Astrocyte of the cerebellum (primary cell): ENCODE measurements at regions of chr6 and their contacts with region 1.

Region 1: DNA sequence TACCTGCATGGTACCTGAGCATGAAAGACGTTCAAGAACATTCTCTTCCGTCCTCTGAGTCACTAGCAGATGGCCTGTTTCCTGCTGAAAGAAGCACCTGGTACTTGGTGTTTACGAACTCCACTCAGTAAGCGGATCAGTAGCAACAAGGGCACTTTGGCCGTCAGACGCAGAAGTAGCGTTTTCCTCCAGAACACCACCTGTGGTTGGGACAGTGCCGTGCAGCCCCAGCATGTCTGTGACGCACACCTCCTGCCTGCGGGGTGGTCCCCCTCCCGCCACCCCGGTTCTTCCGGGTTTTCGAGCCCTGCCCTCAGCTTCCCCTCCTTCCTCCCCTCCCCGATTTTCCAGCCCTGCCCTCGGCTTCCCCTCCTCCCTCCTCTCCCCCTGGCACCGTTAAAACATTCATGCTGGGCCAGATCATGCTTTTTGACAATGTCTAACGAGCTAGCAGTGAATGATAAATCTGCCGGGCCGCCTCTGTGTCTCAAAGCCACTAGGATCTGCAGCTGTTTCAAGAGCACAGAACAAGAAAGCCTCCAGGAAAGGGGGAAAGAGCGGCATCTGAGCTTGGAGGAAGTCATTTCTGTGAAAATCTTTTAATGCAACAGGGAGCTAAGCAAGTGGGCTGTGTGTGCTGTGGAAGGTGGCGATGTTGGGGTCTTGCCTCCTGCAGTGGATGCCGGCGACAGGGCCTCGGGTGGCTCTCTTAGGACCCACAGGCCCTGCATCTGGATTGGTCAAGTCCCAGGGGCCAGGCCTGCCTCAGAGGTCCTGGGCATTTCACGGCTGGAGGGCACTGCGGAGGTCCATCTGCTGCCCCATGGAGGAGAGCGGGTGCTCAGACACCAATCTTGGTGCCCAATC is 207.9 kb downstream of the ERMARD start:
- DNase-seq: no peak
- H3K4me3 ChIP-seq: no peak overlapping the region
- CTCF ChIP-seq: no peak

Region 2: GRCh38 chr6:170102582-170103481 is 143.5 kb after region 1 on chr6:
- in situ Hi-C with region 1: loop called (anchors 10 kb)
- DNase-seq: no peak
- H3K4me3 ChIP-seq: no peak overlapping the region
- CTCF ChIP-seq: no peak

Region 3: GRCh38 chr6:170480050-170480692 is 520.8 kb after region 1 on chr6:
- in situ Hi-C with region 1: no loop called
- DNase-seq: no peak
- H3K4me3 ChIP-seq: no peak overlapping the region
- CTCF ChIP-seq: peak; percentile 40